Right lobe of liver (tissue), 6 donors: ENCODE measurements at regions of chr18 and their contacts with region 1.

Region 1: DNA sequence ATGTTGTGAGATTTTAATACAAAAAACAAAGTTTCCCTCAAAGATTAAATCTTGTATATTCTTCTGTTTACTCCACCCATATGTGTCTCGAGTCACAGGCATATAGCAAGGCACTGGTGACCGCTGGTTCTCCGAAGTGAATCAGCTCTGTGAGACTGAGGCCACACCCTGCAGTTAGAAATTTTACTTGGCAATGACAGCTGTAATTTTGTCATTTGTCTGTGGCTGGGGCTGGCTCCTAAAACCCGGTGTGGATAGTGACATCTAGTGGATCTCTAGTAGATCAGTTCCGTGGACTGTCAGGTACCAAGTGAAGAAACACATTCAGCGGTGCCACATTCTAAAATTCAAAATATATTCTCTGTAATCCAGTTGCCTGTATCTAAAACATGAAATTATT is 278.0 kb downstream of the NEDD4L start:
- DNase-seq: peak in 2 of 3 donors; percentile 60 to 67
- ATAC-seq: peak; percentile 96 to 99 (median 98)
- H3K4me3 ChIP-seq: no peak overlapping the region
- H3K27ac ChIP-seq: peak overlapping the region in 2 of 3 donors; percentile 12 to 43
- H3K4me1 ChIP-seq: peaks cover 0 to 16% (median 2%) of the 10 kb centered on the region in 4 donors
- H3K27me3 ChIP-seq: no peaks in the 10 kb centered on the region
- CTCF ChIP-seq: peak; percentile 70 to 76 (median 72)
- POLR2A ChIP-seq: peak; percentile 2

Region 2: GRCh38 chr18:58158008-58158407 is 164.0 kb before region 1 on chr18:
- intact Hi-C with region 1: loop called in 1 of 2 experiments (anchors 10 kb)
- DNase-seq: no peak
- ATAC-seq: no peak
- H3K4me3 ChIP-seq: no peak overlapping the region
- H3K27ac ChIP-seq: no peak overlapping the region
- H3K4me1 ChIP-seq: no peaks in the 10 kb centered on the region
- H3K27me3 ChIP-seq: no peaks in the 10 kb centered on the region
- CTCF ChIP-seq: no peak
- POLR2A ChIP-seq: no peak

Region 3: GRCh38 chr18:58525517-58525916 is 203.5 kb after region 1 on chr18:
- intact Hi-C with region 1: no loop called
- DNase-seq: no peak
- ATAC-seq: no peak
- H3K4me3 ChIP-seq: no peak overlapping the region
- H3K27ac ChIP-seq: peak overlapping the region in 1 of 3 donors; percentile 49
- H3K4me1 ChIP-seq: peaks cover 0 to 19% (median 10%) of the 10 kb centered on the region in 4 donors
- H3K27me3 ChIP-seq: no peaks in the 10 kb centered on the region
- CTCF ChIP-seq: no peak
- POLR2A ChIP-seq: no peak